Esophagus squamous epithelium (tissue), 5 donors: ENCODE measurements at regions of chr2 and their contacts with region 1.

Region 1: DNA sequence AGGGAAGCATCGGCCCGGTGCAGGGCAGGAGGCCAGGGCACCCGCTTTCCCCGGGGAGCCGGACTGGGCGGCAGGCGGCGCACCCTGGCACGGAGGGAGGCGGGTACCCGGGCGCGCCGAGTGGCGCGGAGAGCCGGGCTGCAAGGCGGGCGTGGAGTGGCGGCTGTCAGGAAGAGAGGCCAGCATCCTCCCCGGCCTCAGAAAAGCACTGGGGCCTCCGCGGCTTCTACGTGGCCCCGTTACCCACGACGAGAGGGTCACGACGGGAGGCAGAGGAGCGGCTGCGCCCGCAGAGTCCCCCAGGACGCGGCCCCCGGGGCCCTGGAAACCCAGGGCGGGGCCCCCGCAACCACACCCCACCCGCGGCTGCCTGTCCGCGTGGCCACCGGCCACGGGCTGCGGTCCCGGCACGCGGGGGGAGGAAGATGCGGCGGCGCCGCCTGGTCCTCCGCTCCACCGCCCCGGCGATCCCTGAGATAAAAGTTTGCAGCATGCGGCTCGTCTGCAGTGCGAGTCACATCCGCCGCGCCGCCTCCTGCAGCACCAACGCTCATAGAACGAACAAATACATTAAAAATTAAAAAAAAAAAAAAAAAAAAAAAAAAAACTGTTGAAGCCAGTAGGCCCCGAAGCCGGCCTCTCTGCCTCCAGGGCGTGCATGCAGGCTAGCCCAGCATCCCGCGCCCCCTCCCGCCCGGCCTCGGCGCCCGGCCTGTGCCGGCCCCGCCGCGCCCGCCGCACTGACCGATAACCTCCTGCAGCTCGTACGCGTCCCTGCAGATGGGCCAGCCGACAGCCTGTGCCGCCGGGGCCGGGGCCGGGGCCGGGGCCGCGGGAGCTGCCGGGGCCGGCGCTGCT is 683 bp downstream of the STK39 start:
- DNase-seq: peak; percentile 15
- H3K4me3 ChIP-seq: peak overlapping the region; percentile 68 to 80 (median 71)
- H3K27ac ChIP-seq: peak overlapping the region; percentile 76 to 89 (median 84)
- H3K4me1 ChIP-seq: peaks cover 24 to 62% (median 25%) of the 10 kb centered on the region in 3 donors
- H3K27me3 ChIP-seq: peaks cover 0 to 4% (median 0%) of the 10 kb centered on the region in 4 donors
- CTCF ChIP-seq: peak in 4 of 6 experiments; percentile 8 to 47 (median 35)
- POLR2A ChIP-seq: no peak

Region 2: GRCh38 chr2:168149150-168149974 is 97.3 kb before region 1 on chr2:
- intact Hi-C with region 1: loop called (anchors 10 kb)
- DNase-seq: no peak
- H3K4me3 ChIP-seq: no peak overlapping the region
- H3K27ac ChIP-seq: no peak overlapping the region
- H3K4me1 ChIP-seq: peaks cover 4 to 44% (median 12%) of the 10 kb centered on the region in 3 donors
- H3K27me3 ChIP-seq: no peaks in the 10 kb centered on the region
- CTCF ChIP-seq: no peak
- POLR2A ChIP-seq: no peak